CD8-positive, alpha-beta T cell (primary cell): ENCODE measurements at regions of chr7 and their contacts with region 1.

Region 1: DNA sequence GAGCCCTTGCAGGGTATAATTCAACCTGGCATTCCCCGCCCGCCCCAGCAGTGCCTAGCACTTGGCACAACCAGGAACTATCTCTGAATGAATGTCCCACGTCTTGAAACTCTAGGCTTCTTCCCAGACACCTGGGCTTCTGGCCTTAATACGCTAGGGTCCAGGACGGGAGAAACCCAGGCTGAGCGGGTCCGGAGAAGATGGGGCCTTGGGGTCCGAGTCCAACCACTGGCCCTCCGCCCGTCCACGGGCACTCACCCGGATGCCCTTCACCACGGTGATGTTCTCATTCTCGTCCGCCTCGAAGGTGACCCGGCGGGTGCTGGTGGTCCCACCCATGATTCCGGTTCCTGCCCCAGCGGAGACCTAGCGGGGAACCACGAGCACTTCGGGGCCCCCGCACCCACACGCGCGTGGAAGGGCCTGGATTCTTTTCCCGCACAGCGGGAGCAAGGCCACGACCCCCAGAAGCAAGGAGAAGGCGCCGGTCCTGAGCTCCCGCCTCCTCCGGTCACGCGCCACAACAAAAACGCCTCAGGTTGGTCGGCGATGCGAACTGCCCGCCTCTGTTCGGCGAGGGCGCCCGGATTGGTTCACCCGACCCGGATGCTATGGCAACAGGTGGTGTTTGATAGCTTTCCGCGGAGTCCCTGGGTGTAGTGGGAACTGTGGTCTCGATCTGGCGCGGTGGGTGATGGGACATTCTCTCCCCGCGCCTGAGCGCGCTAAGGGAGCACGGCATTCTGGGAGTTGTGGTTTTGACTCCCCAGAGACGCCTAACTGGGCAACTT is at the start of gene CHCHD3:
- DNase-seq: peak; percentile 88 to 98 (median 96)
- ATAC-seq: peak; percentile 98
- H3K4me3 ChIP-seq: peak within 1 kb of the TSS; percentile 94 to 96
- H3K4me3 Mint-ChIP-seq: peak within 1 kb of the TSS; percentile 92
- H3K27ac ChIP-seq: peak within 1 kb of the TSS; percentile 92 to 94
- H3K27ac Mint-ChIP-seq: peak within 1 kb of the TSS; percentile 96
- H3K4me1 ChIP-seq: peaks cover 16% of the 10 kb centered on the region
- H3K4me1 Mint-ChIP-seq: peaks cover 33% of the 10 kb centered on the region
- H3K27me3 ChIP-seq: no peaks in the 10 kb centered on the region
- H3K27me3 Mint-ChIP-seq: peaks cover 3% of the 10 kb centered on the region
- CTCF ChIP-seq: no peak
- total RNA-seq, gene CHCHD3: 19.0 to 20.4 TPM

Region 2: DNA sequence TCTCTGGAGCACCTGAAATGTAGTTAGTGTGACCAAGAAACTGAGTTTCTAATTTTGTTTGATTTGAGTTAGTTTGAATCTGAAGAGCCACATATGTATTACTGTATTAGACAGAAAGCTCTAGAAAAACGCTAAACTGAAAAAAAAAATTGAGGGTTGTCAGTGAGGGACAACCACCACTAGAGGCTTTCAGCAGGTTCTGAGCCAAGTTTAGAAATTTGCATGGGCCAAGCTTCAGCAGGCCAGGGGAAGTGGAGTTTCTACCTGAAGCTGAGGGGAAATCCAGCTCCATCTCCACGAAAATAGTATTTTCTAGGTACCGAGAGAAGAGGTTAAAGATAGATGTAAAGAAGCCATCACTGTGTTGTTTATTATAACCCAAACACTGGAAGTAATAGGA is 427.6 kb before region 1 on chr7:
- CTCF ChIA-PET with region 1: no interaction called
- POLR2A ChIA-PET with region 1: no interaction called
- intact Hi-C with region 1: loop called in 1 of 2 experiments (anchors 10 kb)
- DNase-seq: peak in 2 of 9 experiments; percentile 31 to 37
- ATAC-seq: no peak
- H3K4me3 ChIP-seq: no peak overlapping the region
- H3K4me3 Mint-ChIP-seq: peak overlapping the region; percentile 24
- H3K27ac ChIP-seq: no peak overlapping the region
- H3K27ac Mint-ChIP-seq: no peak overlapping the region
- H3K4me1 ChIP-seq: peaks cover 26% of the 10 kb centered on the region
- H3K4me1 Mint-ChIP-seq: peaks cover 38% of the 10 kb centered on the region
- H3K27me3 ChIP-seq: peaks cover 0 to 5% of the 10 kb centered on the region in 2 experiments
- H3K27me3 Mint-ChIP-seq: no peaks in the 10 kb centered on the region
- CTCF ChIP-seq: no peak

Region 3: DNA sequence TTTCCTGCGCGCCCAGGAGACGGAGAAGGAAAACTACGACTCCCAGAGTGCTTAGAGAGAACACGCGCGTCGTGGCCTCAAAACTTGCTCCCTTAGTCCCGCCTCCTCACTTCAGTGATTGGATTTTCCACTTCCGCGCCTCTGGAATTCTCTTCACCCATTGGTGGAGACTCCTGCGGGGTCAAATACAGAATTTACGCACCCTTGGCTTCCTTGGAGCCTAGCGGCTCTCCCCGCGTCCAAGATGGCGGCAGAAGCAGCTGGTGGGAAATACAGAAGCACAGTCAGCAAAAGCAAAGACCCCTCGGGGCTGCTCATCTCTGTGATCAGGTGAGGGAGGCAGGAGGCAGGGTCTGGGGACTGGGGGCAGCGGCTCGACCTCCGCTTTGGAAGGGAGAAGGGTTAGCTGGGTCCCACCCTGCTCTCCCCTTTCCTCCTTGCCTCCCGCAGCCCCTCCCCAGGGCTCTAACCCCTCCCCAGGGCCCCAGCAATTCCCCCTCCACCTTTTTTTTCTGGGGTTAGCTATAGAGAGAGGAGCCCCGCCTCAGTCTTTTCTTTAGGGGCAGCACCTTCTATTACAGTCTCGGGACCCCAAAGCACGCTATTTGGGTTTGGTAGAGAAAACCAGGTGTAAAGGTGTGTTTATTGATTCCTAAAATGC is 171.2 kb after region 1 on chr7 and contains the start of gene EXOC4:
- CTCF ChIA-PET with region 1: interaction called, 3 read pairs
- POLR2A ChIA-PET with region 1: interaction called, 3 read pairs
- intact Hi-C with region 1: loop called in 1 of 2 experiments (anchors 1 kb)
- DNase-seq: peak; percentile 82 to 98 (median 89)
- ATAC-seq: peak; percentile 99
- H3K4me3 ChIP-seq: peak within 1 kb of the TSS; percentile 88
- H3K4me3 Mint-ChIP-seq: peak within 1 kb of the TSS; percentile 96
- H3K27ac ChIP-seq: peak within 1 kb of the TSS; percentile 83 to 92
- H3K27ac Mint-ChIP-seq: peak within 1 kb of the TSS; percentile 96
- H3K4me1 ChIP-seq: peaks cover 15% of the 10 kb centered on the region
- H3K4me1 Mint-ChIP-seq: peaks cover 44% of the 10 kb centered on the region
- H3K27me3 ChIP-seq: no peaks in the 10 kb centered on the region
- H3K27me3 Mint-ChIP-seq: no peaks in the 10 kb centered on the region
- CTCF ChIP-seq: no peak
- total RNA-seq, gene EXOC4: 47.9 to 50.5 TPM